Activated T-helper 1 cell treated with anti-CD3 and anti-CD28 coated beads, Interleukin-12 subunit alpha, Interleukin-12 subunit beta, Interleukin-2, Interleukin-4 antibody, amounts not matched to agents 30 ng/mL and 10 ng/mL and 1 ng/mL, durations not matched to agents 14 hours and 24 hours and 36 hours (primary cell): ENCODE measurements at regions of chr6 and their contacts with region 1.

Region 1: DNA sequence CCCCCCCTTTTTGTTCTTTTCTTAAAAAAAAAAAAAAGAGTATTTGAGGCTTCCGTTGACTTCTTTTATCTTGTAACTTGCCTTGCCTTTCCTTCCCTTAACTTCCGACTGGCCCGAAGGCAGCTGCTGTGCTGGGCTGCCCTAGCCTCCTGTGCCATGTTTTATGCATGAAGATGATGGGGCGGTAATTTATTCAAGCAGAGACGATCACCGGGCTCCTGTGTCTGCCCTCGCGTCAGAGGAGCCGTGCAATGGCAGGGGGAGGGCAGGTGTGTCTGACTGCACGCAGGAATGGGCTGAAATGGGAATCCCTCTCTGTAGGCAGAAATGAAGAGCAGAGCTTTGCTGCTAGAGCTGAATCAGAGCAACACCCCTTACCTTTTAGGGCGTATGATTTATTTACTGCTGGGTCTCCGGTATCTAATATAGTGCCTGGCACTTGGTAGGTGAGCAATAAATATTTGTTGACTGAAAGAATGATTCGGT is 106.3 kb upstream of the RIPOR2 start:
- DNase-seq: peak; percentile 30
- H3K4me3 Mint-ChIP-seq: peak overlapping the region; percentile 88
- H3K27ac Mint-ChIP-seq: peak overlapping the region; percentile 95
- H3K4me1 Mint-ChIP-seq: peaks cover 66% of the 10 kb centered on the region
- H3K27me3 Mint-ChIP-seq: no peaks in the 10 kb centered on the region

Region 2: GRCh38 chr6:25056130-25056529 is 14.1 kb after region 1 on chr6:
- intact Hi-C with region 1: loop called (anchors 2 kb)
- DNase-seq: peak; percentile 71
- H3K4me3 Mint-ChIP-seq: peak overlapping the region; percentile 71
- H3K27ac Mint-ChIP-seq: peak overlapping the region; percentile 95
- H3K4me1 Mint-ChIP-seq: peaks cover 61% of the 10 kb centered on the region
- H3K27me3 Mint-ChIP-seq: no peaks in the 10 kb centered on the region

Region 3: DNA sequence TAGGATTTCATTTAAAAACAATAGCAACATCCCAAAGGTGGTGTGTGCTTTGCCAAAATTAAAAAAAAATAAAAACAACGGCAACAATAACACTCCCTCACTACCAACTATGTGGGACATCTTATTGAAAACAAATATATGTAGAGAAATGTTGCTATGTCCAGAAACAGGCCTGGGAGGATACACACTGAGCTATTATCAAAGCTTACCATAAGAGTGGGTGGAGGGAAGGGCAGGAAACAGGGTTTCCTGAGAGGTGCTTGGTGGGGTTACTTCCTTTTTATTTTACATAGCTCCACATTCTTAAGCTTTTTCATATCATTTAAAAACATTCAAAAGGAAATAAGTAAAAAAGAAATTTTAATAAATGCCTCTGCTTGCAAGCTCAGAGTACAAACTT is 43.7 kb after region 1 on chr6:
- intact Hi-C with region 1: no loop called
- DNase-seq: no peak
- H3K4me3 Mint-ChIP-seq: no peak overlapping the region
- H3K27ac Mint-ChIP-seq: peak overlapping the region; percentile 67
- H3K4me1 Mint-ChIP-seq: peaks cover 10% of the 10 kb centered on the region
- H3K27me3 Mint-ChIP-seq: no peaks in the 10 kb centered on the region